Activated naive CD4-positive, alpha-beta T cell treated with anti-CD3 and anti-CD28 coated beads for 36 hours (primary cell): ENCODE measurements at regions of chr19 and their contacts with region 1.

Region 1: GRCh38 chr19:53792721-53793433 is 31.2 kb downstream of the NLRP12 start:
- DNase-seq: peak; percentile 86
- H3K4me3 Mint-ChIP-seq: no peak overlapping the region
- H3K27ac Mint-ChIP-seq: no peak overlapping the region
- H3K4me1 Mint-ChIP-seq: no peaks in the 10 kb centered on the region
- H3K27me3 Mint-ChIP-seq: no peaks in the 10 kb centered on the region

Region 2: GRCh38 chr19:53808710-53809125 is 15.8 kb after region 1 on chr19:
- CTCF ChIA-PET with region 1: interaction called, 10 read pairs
- intact Hi-C with region 1: no loop called
- DNase-seq: no peak
- H3K4me3 Mint-ChIP-seq: no peak overlapping the region
- H3K27ac Mint-ChIP-seq: no peak overlapping the region
- H3K4me1 Mint-ChIP-seq: no peaks in the 10 kb centered on the region
- H3K27me3 Mint-ChIP-seq: no peaks in the 10 kb centered on the region

Region 3: DNA sequence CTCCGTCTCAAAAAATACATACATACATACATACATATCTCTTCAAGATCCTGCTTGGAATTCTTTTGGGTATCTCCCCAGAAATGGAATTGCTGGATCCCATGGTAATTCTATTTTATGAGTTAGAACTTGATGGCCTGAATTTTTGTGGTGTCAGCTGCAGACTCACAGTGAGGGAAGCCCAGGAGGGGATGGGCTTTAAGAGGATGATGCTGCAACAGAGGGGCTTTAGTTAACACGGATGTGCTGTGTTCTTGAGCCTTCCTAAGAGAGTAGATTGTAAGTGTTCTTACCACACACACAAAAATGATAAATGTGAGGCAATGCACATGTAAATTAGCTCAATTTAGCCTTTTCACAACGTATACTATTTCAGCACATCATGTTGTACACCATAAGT is 230.3 kb after region 1 on chr19:
- CTCF ChIA-PET with region 1: interaction called, 17 read pairs
- intact Hi-C with region 1: no loop called
- DNase-seq: no peak
- H3K4me3 Mint-ChIP-seq: no peak overlapping the region
- H3K27ac Mint-ChIP-seq: no peak overlapping the region
- H3K4me1 Mint-ChIP-seq: peaks cover 2% of the 10 kb centered on the region
- H3K27me3 Mint-ChIP-seq: peaks cover 33% of the 10 kb centered on the region

Region 4: GRCh38 chr19:54029930-54030490 is 237.1 kb after region 1 on chr19:
- CTCF ChIA-PET with region 1: interaction called, 17 read pairs
- intact Hi-C with region 1: loop called (anchors 1 kb)
- DNase-seq: peak; percentile 72
- H3K4me3 Mint-ChIP-seq: no peak overlapping the region
- H3K27ac Mint-ChIP-seq: no peak overlapping the region
- H3K4me1 Mint-ChIP-seq: peaks cover 1% of the 10 kb centered on the region
- H3K27me3 Mint-ChIP-seq: peaks cover 15% of the 10 kb centered on the region